Activated CD4-positive, alpha-beta memory T cell treated with anti-CD3 and anti-CD28 coated beads for 36 hours (primary cell): ENCODE measurements at regions of chr12 and their contacts with region 1.

Region 1: GRCh38 chr12:123972457-123973401 is at the starts of genes CCDC92 and ZNF664:
- DNase-seq: peak; percentile 97
- H3K4me3 Mint-ChIP-seq: peak within 1 kb of the TSS; percentile 93
- H3K27ac Mint-ChIP-seq: peak within 1 kb of the TSS; percentile 73
- H3K4me1 Mint-ChIP-seq: peaks cover 44% of the 10 kb centered on the region
- H3K27me3 Mint-ChIP-seq: no peaks in the 10 kb centered on the region
- total RNA-seq, gene CCDC92: 11.4 to 11.7 TPM
- total RNA-seq, gene ZNF664: 53.2 to 56.9 TPM

Region 2: GRCh38 chr12:123938679-123939480 is 33.8 kb before region 1 on chr12:
- CTCF ChIA-PET with region 1: interaction called, 3 read pairs
- POLR2A ChIA-PET with region 1: no interaction called
- intact Hi-C with region 1: loop called (anchors 2 kb)
- DNase-seq: peak; percentile 38
- H3K4me3 Mint-ChIP-seq: peak overlapping the region; percentile 66
- H3K27ac Mint-ChIP-seq: peak overlapping the region; percentile 80
- H3K4me1 Mint-ChIP-seq: peaks cover 20% of the 10 kb centered on the region
- H3K27me3 Mint-ChIP-seq: no peaks in the 10 kb centered on the region